Activated CD4-positive, alpha-beta memory T cell treated with anti-CD3 and anti-CD28 coated beads, Interleukin-2, amount 10 ng/mL, durations not matched to agents 7 days and 5 days (primary cell): ENCODE measurements at regions of chr3 and their contacts with region 1.

Region 1: DNA sequence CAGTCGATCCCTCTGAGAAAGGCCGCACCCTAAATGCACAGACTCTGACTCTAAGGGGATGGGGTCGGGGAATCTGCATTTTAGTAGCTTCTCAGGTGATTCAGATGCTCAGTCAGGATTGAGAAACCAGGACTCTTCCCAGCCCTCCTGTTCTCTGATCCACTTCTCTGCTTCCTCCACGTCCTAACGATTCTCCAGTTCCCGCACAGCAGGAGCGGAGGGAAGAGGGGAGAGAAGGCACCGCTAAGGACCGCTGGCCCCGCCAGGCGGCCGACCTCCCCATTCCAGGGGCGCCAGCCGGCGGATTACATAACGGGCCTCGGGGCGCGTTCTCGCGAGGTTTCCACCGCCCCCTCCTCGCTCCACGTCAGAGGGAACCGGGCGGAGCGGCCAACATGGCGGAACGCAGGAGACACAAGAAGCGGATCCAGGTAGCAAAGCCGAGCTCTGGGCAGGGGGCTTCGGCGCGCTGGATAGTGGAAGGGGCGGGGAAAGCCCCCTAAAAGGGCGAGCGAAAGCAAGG is at the start of gene SEC62:
- DNase-seq: peak; percentile 92
- H3K4me3 Mint-ChIP-seq: peak within 1 kb of the TSS; percentile 85
- H3K27ac Mint-ChIP-seq: peak within 1 kb of the TSS; percentile 92
- H3K4me1 Mint-ChIP-seq: peaks cover 40% of the 10 kb centered on the region
- H3K27me3 Mint-ChIP-seq: no peaks in the 10 kb centered on the region
- total RNA-seq, gene SEC62: 53.7 to 57.9 TPM

Region 2: DNA sequence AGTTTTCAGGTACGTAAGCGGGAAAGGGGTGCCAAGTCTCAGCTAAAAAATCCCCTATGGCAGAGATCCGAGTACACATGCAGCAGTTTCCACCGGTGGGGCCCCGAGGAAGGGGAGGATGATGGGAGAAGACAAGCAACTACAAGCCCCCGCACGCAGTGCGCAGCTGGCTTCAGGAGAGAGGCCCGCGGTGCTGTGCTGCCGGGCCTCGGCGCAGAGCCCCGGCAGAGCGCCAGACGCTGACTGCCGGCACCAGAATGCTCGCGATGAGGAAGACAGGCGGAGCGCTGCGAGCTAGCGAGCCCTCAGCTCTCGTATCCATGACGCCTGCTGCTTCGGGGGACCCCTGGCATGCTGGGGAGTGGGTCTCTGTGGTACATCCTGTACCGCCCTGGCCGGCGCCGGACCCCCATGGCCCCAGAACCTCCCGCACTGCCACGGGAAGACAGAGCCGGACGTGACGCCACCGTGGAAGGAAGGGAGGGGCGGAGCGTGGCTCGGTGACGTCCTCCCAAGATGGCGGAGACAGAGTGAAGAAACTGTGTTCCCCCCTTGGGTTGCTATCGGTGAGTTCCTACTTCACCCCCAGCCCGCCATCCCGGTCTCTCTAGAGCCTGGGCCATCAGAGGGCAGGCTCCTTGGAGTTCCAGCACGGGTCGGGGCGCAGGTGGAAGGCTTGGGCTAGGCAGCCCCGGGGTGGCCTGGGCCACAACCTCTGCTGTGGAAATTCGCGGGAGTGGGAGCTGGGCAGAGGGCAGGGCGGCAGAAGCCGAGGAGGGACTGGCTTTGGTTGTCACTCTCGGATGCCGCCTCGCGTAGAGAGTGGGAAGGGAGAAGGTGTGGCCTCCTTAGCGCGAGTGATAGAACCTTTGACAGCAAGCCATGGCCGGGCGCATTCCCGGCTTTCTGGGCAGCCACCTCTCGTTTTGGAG is 193.3 kb before region 1 on chr3 and contains the start of gene MYNN:
- CTCF ChIA-PET with region 1: no interaction called
- POLR2A ChIA-PET with region 1: interaction called, 36 read pairs
- DNase-seq: peak; percentile 93
- H3K4me3 Mint-ChIP-seq: peak within 1 kb of the TSS; percentile 93
- H3K27ac Mint-ChIP-seq: peak within 1 kb of the TSS; percentile 100
- H3K4me1 Mint-ChIP-seq: peaks cover 43% of the 10 kb centered on the region
- H3K27me3 Mint-ChIP-seq: no peaks in the 10 kb centered on the region
- total RNA-seq, gene MYNN: 14.9 to 15.6 TPM

Region 3: DNA sequence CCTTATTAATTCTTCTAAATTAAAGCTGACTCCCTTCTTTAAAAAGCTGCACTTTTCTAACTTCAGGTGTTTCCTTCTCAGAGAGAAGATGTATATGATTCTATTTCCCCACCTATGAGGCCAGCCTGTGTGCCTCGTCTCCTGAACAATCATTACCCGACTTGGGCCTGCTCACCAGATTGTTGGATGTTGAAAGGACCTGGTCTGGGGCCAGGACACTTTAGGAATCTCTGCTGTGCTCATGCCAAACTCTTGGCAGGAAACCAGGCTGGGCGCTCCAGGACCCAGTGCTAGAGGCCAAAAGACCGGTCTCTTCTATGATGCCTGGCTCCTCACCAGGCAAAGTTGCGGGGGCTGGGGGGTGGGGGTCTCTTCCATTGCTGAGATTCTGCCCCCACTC is 79.8 kb before region 1 on chr3:
- CTCF ChIA-PET with region 1: no interaction called
- POLR2A ChIA-PET with region 1: no interaction called
- DNase-seq: no peak
- H3K4me3 Mint-ChIP-seq: no peak overlapping the region
- H3K27ac Mint-ChIP-seq: no peak overlapping the region
- H3K4me1 Mint-ChIP-seq: no peaks in the 10 kb centered on the region
- H3K27me3 Mint-ChIP-seq: no peaks in the 10 kb centered on the region

Region 4: GRCh38 chr3:169980055-169980454 is 13.6 kb after region 1 on chr3:
- CTCF ChIA-PET with region 1: interaction called, 10 read pairs
- POLR2A ChIA-PET with region 1: interaction called, 18 read pairs
- DNase-seq: no peak
- H3K4me3 Mint-ChIP-seq: no peak overlapping the region
- H3K27ac Mint-ChIP-seq: no peak overlapping the region
- H3K4me1 Mint-ChIP-seq: peaks cover 3% of the 10 kb centered on the region
- H3K27me3 Mint-ChIP-seq: no peaks in the 10 kb centered on the region

Region 5: DNA sequence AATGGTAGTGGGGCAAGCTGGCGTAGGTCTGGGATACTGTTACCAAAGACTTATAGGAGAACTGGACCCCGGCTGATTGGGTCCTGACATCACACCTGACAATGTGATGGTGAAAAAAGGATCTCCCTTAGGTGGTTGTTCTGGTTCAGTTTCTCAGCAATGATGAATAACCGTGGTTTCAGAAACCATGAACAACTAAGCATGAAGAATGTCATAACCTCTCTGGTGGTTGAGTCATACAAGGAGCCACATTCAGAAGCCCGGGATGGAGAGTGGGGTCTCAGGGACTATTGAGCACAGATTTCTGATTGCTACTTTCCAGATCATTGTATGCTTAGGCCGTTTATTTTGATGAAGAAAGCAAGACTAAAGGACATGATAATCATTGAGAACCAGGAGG is 88.7 kb after region 1 on chr3:
- CTCF ChIA-PET with region 1: interaction called, 16 read pairs
- POLR2A ChIA-PET with region 1: interaction called, 3 read pairs
- DNase-seq: no peak
- H3K4me3 Mint-ChIP-seq: no peak overlapping the region
- H3K27ac Mint-ChIP-seq: no peak overlapping the region
- H3K4me1 Mint-ChIP-seq: peaks cover 45% of the 10 kb centered on the region
- H3K27me3 Mint-ChIP-seq: no peaks in the 10 kb centered on the region